Activated CD4-positive, alpha-beta memory T cell treated with anti-CD3 and anti-CD28 coated beads for 36 hours (primary cell): ENCODE measurements at regions of chr7 and their contacts with region 1.

Region 1: GRCh38 chr7:8295638-8296361 is 33.8 kb upstream of the ICA1 start:
- DNase-seq: peak; percentile 20
- H3K4me3 Mint-ChIP-seq: no peak overlapping the region
- H3K27ac Mint-ChIP-seq: no peak overlapping the region
- H3K4me1 Mint-ChIP-seq: peaks cover 2% of the 10 kb centered on the region
- H3K27me3 Mint-ChIP-seq: peaks cover 9% of the 10 kb centered on the region

Region 2: GRCh38 chr7:7681179-7681935 is 614.4 kb before region 1 on chr7:
- CTCF ChIA-PET with region 1: interaction called, 13 read pairs
- POLR2A ChIA-PET with region 1: no interaction called
- intact Hi-C with region 1: no loop called
- DNase-seq: no peak
- H3K4me3 Mint-ChIP-seq: no peak overlapping the region
- H3K27ac Mint-ChIP-seq: peak overlapping the region; percentile 52
- H3K4me1 Mint-ChIP-seq: peaks cover 30% of the 10 kb centered on the region
- H3K27me3 Mint-ChIP-seq: no peaks in the 10 kb centered on the region

Region 3: GRCh38 chr7:8035647-8036518 is 259.9 kb before region 1 on chr7:
- CTCF ChIA-PET with region 1: interaction called, 3 read pairs
- POLR2A ChIA-PET with region 1: no interaction called
- intact Hi-C with region 1: loop called (anchors 5 kb)
- DNase-seq: no peak
- H3K4me3 Mint-ChIP-seq: no peak overlapping the region
- H3K27ac Mint-ChIP-seq: peak overlapping the region; percentile 43
- H3K4me1 Mint-ChIP-seq: peaks cover 25% of the 10 kb centered on the region
- H3K27me3 Mint-ChIP-seq: no peaks in the 10 kb centered on the region

Region 4: DNA sequence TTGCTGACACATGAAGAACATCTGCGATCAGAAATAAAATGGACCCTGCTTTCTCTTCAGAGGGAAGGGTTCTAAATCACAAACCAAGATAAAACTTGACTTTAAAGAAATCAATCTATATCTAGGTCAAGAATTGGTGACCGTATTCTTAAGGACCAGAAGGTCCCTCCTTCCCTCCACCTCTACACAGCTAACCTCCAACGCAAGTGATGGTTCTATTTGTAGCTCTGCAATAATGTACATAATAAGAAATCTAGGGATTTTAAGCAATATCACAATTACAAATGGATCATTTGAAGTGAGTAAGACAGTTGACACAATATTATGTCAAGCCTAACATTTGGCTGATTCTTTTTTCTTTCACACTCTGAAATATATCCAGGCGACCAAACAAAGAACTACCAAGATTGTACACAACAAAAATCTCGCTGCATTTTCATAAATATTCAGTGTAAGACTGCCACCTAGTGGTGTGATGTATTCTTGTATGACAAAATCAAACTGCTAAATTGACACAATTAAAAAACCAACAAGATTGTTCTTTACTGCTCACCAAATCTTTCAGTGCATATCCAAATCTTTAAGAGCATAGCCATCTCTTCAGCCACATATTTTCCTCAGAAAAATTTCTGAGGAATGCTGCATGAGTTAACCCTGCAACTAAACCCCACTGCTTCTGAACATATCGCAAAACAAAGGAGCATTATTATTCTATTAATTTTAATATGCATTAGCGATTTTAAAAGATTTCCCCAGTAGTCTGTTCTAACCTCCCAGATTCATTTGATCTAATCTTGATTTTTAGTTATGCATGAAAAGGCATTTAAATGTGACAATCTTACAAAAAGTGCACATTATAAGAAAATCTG is 78.4 kb before region 1 on chr7:
- CTCF ChIA-PET with region 1: interaction called, 10 read pairs
- POLR2A ChIA-PET with region 1: no interaction called
- intact Hi-C with region 1: loop called (anchors 1 kb)
- DNase-seq: no peak
- H3K4me3 Mint-ChIP-seq: no peak overlapping the region
- H3K27ac Mint-ChIP-seq: no peak overlapping the region
- H3K4me1 Mint-ChIP-seq: peaks cover 2% of the 10 kb centered on the region
- H3K27me3 Mint-ChIP-seq: no peaks in the 10 kb centered on the region

Region 5: DNA sequence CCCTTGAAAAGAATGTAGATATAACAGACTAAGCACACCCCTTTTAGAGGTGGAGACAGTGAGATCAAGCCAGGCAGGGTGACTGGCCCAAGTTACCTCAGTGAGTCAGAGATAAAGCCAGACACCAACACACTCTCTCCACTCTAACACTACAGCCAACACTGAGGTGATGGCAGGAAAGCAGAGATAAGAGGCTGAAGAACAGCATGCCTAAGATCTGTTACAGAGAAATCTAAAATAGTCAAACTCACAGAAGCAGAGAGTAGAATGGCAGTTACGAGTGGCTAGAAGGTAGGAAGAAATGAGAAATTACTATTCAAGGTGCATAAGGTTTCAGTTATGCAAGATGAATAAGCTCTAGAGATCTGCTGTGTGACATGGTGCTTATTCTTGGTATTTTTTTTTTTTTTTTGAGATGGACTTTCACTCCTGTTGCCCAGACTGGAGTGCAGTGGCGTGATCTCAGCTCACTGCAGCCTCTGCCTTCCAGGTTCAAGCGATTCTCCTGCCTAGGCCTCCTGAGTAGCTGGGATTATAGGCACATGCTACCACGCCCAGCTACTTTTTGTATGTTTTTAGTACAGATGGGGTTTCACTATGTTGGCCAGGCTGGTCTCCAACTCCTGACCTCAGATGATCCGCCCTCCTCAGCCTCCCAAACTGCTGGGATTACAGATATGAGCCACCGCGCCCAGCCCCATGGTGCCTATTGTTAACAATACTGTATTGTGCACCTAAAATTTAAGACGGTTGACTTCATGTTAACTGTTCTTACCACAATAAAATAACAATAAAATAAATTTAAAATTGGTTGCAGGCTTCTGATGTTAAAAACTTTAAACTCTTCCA is 62.6 kb before region 1 on chr7:
- CTCF ChIA-PET with region 1: interaction called, 6 read pairs
- POLR2A ChIA-PET with region 1: no interaction called
- intact Hi-C with region 1: loop called (anchors 5 kb)
- DNase-seq: no peak
- H3K4me3 Mint-ChIP-seq: no peak overlapping the region
- H3K27ac Mint-ChIP-seq: no peak overlapping the region
- H3K4me1 Mint-ChIP-seq: no peaks in the 10 kb centered on the region
- H3K27me3 Mint-ChIP-seq: peaks cover 3% of the 10 kb centered on the region

Region 6: DNA sequence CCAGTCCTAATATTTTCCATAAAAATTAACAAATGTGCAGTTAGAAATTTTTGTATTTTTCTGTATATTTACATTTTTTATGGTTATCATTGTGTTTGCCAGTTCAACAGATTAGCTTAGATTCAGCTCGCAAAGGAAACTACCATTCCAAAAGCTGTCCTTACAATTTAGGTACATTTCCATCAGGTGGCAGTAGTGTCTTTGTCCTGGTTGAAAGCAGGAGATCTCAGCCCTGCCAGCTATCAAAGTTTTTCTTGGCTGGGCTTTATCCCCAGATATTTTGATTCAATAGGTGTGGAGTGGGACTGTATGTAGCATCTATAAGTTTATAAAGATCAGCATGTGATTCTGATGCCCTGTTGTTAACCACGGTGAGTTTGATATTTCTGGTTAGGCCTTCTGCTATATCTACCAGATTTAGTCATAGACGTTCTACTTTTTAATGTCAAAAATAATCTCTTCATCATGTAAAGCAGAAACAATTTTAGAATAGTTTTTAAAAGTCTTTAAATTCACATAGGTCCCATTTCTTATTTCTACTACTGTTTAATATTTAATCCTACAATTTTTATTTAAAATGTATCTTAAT is 18.3 kb before region 1 on chr7:
- CTCF ChIA-PET with region 1: interaction called, 10 read pairs
- POLR2A ChIA-PET with region 1: no interaction called
- intact Hi-C with region 1: no loop called
- DNase-seq: no peak
- H3K4me3 Mint-ChIP-seq: no peak overlapping the region
- H3K27ac Mint-ChIP-seq: no peak overlapping the region
- H3K4me1 Mint-ChIP-seq: no peaks in the 10 kb centered on the region
- H3K27me3 Mint-ChIP-seq: no peaks in the 10 kb centered on the region